Activated naive CD4-positive, alpha-beta T cell treated with anti-CD3 and anti-CD28 coated beads for 36 hours (primary cell): ENCODE measurements at regions of chr4 and their contacts with region 1.

Region 1: DNA sequence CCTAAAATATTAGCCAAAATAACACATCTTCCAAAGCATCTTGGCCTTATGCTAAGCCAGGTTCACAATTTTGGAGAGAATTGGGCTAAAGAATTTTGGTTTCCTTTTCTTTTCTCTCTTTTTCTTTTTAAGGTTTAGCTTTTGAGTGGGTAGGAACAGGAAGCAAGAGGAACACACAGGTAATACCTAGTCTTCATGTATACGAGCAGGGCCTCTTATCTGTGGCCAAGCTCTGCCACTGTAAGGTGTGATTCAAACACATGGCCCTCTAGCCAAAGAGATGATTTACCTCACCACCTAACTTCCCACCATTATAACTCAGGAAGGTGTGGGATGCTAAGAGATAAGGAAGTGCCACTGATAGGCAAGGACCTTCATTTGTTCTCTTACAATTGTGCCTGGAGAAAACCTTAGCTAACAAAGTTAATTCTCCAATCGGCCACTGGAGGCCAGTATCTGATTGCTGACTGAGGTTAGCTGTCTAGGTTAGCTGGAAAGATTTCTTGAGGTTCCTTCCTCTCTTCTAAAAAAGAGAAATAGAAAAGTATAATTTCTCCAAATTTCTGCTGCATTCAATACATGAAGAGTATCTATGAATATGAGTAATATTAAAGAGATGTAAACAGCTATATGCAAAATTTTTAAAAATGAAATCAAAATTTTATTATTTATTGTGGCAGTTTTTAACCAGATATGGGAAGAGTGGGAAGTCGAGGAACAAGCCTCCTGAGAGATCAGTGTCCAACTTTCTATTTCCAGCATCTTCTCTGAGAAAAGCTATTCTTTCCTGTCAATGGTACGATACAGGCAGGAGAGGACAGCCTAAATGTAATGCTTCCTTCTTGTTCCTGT is 30.1 kb upstream of the BBS7 start:
- DNase-seq: peak; percentile 79
- H3K4me3 Mint-ChIP-seq: no peak overlapping the region
- H3K27ac Mint-ChIP-seq: no peak overlapping the region
- H3K4me1 Mint-ChIP-seq: peaks cover 10% of the 10 kb centered on the region
- H3K27me3 Mint-ChIP-seq: no peaks in the 10 kb centered on the region

Region 2: DNA sequence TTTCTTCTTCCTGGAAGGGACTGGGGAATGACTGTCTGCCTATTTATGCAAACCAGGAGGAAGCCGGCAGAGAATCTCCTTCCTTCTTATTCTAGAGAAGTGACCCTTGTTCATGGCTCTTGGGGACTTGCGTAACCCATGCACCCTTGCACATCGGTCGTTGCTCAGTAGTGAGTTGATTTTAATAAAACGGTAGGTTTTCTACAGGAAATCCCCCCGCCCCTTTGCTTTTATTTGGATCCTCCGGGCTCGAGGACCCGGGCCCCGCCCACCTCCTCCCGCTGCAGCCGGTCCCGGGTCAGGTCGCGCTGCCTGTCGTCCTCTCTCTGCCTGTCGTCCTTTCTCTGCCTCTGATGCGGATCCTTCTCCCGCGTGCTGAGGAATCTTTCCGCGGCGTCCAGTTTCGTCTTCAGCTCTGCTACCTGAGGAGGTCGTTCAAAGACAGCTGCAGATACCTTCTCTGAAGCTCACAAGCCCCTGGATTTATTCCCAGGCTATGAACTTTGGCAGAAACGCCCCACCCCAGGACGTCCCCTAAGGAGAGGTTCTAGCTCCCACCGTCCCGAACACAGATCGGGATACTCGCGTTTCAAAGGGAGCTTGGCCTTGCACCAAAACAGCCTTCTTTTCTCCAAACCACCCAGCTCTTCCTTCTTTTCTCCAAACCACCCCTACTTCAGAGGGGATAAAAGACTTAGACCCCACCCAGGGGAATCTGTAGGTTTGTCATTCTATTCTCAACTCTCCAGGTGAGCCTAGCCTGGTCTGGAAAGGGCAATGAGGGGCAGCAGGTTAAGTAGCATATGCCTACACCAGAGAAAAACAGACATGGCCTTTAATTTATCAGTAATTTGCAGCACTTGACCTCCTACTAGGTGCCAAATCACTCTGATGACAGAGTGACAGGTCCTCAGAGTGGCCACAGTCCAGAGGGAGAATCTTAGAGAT is 743.3 kb before region 1 on chr4:
- CTCF ChIA-PET with region 1: no interaction called
- intact Hi-C with region 1: no loop called
- DNase-seq: peak; percentile 42
- H3K4me3 Mint-ChIP-seq: peak overlapping the region; percentile 78
- H3K27ac Mint-ChIP-seq: no peak overlapping the region
- H3K4me1 Mint-ChIP-seq: peaks cover 43% of the 10 kb centered on the region
- H3K27me3 Mint-ChIP-seq: no peaks in the 10 kb centered on the region

Region 3: GRCh38 chr4:121869841-121870656 is 30.3 kb before region 1 on chr4 and contains the start of gene BBS7:
- CTCF ChIA-PET with region 1: interaction called, 3 read pairs
- intact Hi-C with region 1: loop called (anchors 1 kb)
- DNase-seq: peak; percentile 99
- H3K4me3 Mint-ChIP-seq: peak within 1 kb of the TSS; percentile 95
- H3K27ac Mint-ChIP-seq: peak within 1 kb of the TSS; percentile 76
- H3K4me1 Mint-ChIP-seq: peaks cover 30% of the 10 kb centered on the region
- H3K27me3 Mint-ChIP-seq: peaks cover 11% of the 10 kb centered on the region
- total RNA-seq, gene BBS7: 16.6 to 19.4 TPM

Region 4: DNA sequence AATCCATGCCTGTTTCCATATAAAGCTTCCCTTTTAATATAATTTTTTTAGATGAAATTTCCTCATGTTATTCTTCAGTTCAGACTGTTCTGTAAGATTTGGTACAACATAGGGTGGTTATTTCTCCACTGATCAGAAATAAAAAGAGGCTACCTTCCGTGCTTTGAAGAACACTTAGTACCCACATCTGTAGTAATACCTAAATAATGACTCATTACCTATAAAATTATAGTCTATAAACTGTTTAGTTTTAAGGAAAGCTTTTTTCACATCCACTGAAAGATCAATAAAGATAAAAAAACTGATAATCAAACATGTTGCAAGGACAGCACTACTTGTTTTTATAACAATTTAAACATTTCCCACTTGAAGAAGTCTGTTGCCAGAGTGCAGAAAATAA is 27.6 kb after region 1 on chr4:
- CTCF ChIA-PET with region 1: interaction called, 10 read pairs
- intact Hi-C with region 1: no loop called
- DNase-seq: no peak
- H3K4me3 Mint-ChIP-seq: no peak overlapping the region
- H3K27ac Mint-ChIP-seq: no peak overlapping the region
- H3K4me1 Mint-ChIP-seq: peaks cover 1% of the 10 kb centered on the region
- H3K27me3 Mint-ChIP-seq: peaks cover 22% of the 10 kb centered on the region

Region 5: DNA sequence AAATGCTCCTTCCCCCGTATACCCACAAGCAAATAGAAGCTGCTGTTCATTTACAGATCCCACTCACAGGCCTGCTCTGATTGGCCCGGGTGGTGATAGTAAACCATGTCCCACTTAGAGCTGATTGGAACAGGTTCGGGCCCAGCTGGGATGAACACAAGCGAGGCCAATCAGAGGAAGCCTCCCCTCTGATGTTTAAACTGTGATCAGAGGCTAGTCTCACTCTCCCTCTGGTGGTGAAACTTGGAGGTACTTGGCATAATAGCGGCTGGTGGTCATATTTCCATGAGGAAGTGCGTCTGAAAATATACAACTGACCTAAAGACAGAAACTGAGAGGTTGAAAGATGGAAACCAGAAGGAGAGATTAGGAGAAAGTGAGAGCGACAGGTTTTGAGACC is 103.0 kb after region 1 on chr4:
- CTCF ChIA-PET with region 1: interaction called, 10 read pairs
- intact Hi-C with region 1: loop called (anchors 1 kb)
- DNase-seq: peak; percentile 39
- H3K4me3 Mint-ChIP-seq: no peak overlapping the region
- H3K27ac Mint-ChIP-seq: no peak overlapping the region
- H3K4me1 Mint-ChIP-seq: no peaks in the 10 kb centered on the region
- H3K27me3 Mint-ChIP-seq: peaks cover 4% of the 10 kb centered on the region

Region 6: GRCh38 chr4:122224348-122224747 is 324.0 kb after region 1 on chr4:
- CTCF ChIA-PET with region 1: interaction called, 6 read pairs
- intact Hi-C with region 1: loop called (anchors 1 kb)
- DNase-seq: peak; percentile 35
- H3K4me3 Mint-ChIP-seq: no peak overlapping the region
- H3K27ac Mint-ChIP-seq: no peak overlapping the region
- H3K4me1 Mint-ChIP-seq: no peaks in the 10 kb centered on the region
- H3K27me3 Mint-ChIP-seq: no peaks in the 10 kb centered on the region

Region 7: GRCh38 chr4:122450847-122451246 is 550.5 kb after region 1 on chr4:
- CTCF ChIA-PET with region 1: interaction called, 3 read pairs
- intact Hi-C with region 1: loop called (anchors 2 kb)
- DNase-seq: peak; percentile 59
- H3K4me3 Mint-ChIP-seq: peak overlapping the region; percentile 67
- H3K27ac Mint-ChIP-seq: peak overlapping the region; percentile 96
- H3K4me1 Mint-ChIP-seq: peaks cover 17% of the 10 kb centered on the region
- H3K27me3 Mint-ChIP-seq: no peaks in the 10 kb centered on the region

Region 8: GRCh38 chr4:122716825-122717448 is 816.6 kb after region 1 on chr4:
- CTCF ChIA-PET with region 1: interaction called, 3 read pairs
- intact Hi-C with region 1: loop called (anchors 2 kb)
- DNase-seq: peak; percentile 94
- H3K4me3 Mint-ChIP-seq: no peak overlapping the region
- H3K27ac Mint-ChIP-seq: peak overlapping the region; percentile 65
- H3K4me1 Mint-ChIP-seq: peaks cover 41% of the 10 kb centered on the region
- H3K27me3 Mint-ChIP-seq: no peaks in the 10 kb centered on the region